Activated CD8-positive, alpha-beta T cell treated with anti-CD3 and anti-CD28 coated beads, Interleukin-2, amount 10 ng/mL, durations not matched to agents 7 days and 5 days (primary cell): ENCODE measurements at regions of chr12 and their contacts with region 1.

Region 1: DNA sequence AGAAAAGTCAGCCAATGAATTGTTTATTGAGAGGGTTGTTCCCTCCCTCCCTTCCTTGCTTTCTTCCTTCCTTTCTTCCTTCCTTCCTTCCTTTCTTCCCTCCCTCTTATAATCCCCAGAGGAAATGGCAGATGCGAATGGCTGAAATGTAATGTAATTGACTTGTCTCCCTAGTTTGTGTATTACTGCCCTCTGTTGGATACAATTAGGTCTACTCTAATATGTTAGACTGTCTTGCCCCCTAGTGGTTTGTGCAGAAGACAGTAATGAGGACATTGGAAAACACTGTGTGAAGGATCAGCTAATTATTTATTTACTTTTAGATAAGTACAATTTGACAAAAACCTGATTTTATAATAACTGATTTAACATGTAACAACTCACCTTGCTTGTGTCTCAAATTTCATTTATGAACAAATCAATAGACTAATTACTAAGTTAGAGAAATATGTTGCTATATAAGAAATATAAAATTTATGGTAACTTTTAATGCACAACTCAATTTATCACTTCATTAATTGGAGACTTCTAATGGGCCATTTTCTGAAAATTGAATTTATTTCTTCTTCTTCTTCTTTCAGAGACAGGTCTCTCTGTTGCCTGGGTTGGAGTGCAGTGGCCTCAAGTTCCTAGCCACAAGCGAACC is 229.8 kb upstream of the LRIG3 start:
- DNase-seq: peak; percentile 27
- ATAC-seq: peak; percentile 87
- H3K4me3 Mint-ChIP-seq: no peak overlapping the region
- H3K27ac Mint-ChIP-seq: no peak overlapping the region
- H3K4me1 Mint-ChIP-seq: no peaks in the 10 kb centered on the region
- H3K27me3 Mint-ChIP-seq: no peaks in the 10 kb centered on the region

Region 2: GRCh38 chr12:59113831-59114615 is 36.1 kb before region 1 on chr12:
- CTCF ChIA-PET with region 1: interaction called, 10 read pairs
- POLR2A ChIA-PET with region 1: no interaction called
- DNase-seq: peak; percentile 77
- ATAC-seq: peak; percentile 78
- H3K4me3 Mint-ChIP-seq: no peak overlapping the region
- H3K27ac Mint-ChIP-seq: no peak overlapping the region
- H3K4me1 Mint-ChIP-seq: no peaks in the 10 kb centered on the region
- H3K27me3 Mint-ChIP-seq: no peaks in the 10 kb centered on the region

Region 3: DNA sequence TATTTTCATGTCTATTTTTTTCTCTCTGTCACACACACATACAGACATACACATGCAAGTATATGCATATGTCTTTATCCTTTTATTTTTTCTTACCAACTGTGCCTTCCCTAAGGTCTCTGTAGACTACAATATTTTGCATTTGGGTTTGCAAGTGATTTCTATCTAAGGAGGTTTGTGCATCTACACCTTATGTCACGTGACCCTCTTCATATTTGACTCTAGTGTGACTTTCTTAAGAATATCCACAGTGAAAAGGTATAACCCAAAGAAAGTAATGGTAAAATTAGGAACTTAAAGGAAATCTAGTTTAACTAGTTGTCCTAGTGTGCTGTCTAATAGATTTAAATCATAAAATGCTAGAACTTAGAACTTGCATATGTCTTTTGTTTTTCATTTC is 69.0 kb after region 1 on chr12:
- CTCF ChIA-PET with region 1: no interaction called
- POLR2A ChIA-PET with region 1: no interaction called
- DNase-seq: no peak
- ATAC-seq: no peak
- H3K4me3 Mint-ChIP-seq: no peak overlapping the region
- H3K27ac Mint-ChIP-seq: no peak overlapping the region
- H3K4me1 Mint-ChIP-seq: no peaks in the 10 kb centered on the region
- H3K27me3 Mint-ChIP-seq: no peaks in the 10 kb centered on the region